ENCODE measurements at regions of chr1 and their contacts with region 1.

Region 1: GRCh38 chr1:171494076-171494475 is 8.7 kb downstream of the PRRC2C start:
- DNase-seq: no peak
- H3K4me3 ChIP-seq: no peak overlapping the region
- H3K4me3 Mint-ChIP-seq: no peak overlapping the region
- H3K27ac Mint-ChIP-seq: no peak overlapping the region
- H3K4me1 ChIP-seq: peaks cover 8% of the 10 kb centered on the region; the same call in 1 of the 2 replicates
- H3K4me1 Mint-ChIP-seq: peaks cover 25% of the 10 kb centered on the region
- H3K27me3 ChIP-seq: no peaks in the 10 kb centered on the region
- H3K27me3 Mint-ChIP-seq: no peaks in the 10 kb centered on the region
- CTCF ChIP-seq: no peak

Region 2: DNA sequence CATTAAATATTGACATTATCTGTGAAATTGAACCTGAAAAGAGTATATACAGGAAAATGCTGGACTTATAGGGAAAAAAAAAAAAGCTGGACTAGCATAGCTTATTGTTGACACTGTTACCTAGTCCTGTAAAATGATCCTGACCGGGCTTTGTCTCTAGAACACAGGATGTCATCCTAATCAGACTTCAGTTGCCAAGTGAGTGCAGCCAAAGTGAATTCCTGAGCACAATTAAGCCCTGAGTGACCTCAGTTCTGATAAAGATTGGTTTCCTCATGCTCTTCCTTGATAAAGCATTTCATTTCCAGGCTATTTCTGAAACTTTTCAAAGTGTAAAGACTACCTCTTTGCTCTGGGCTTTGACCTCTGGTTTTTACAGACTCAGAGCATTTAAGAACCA is 1884.0 kb before region 1 on chr1:
- CTCF ChIA-PET with region 1: no interaction called
- POLR2A ChIA-PET with region 1: interaction called, 10 read pairs
- intact Hi-C with region 1: no loop called
- DNase-seq: no peak
- H3K4me3 ChIP-seq: no peak overlapping the region
- H3K4me3 Mint-ChIP-seq: no peak overlapping the region
- H3K27ac Mint-ChIP-seq: no peak overlapping the region
- H3K4me1 ChIP-seq: 0 out of 2 replicates have a peak, but pooled peaks cover 1% of the 10 kb centered on the region
- H3K4me1 Mint-ChIP-seq: peaks cover 1% of the 10 kb centered on the region
- H3K27me3 ChIP-seq: no peaks in the 10 kb centered on the region
- H3K27me3 Mint-ChIP-seq: peaks cover 5% of the 10 kb centered on the region
- CTCF ChIP-seq: no peak

Region 3: GRCh38 chr1:171334024-171334640 is 159.9 kb before region 1 on chr1:
- CTCF ChIA-PET with region 1: no interaction called
- POLR2A ChIA-PET with region 1: no interaction called
- intact Hi-C with region 1: no loop called
- DNase-seq: no peak
- H3K4me3 ChIP-seq: no peak overlapping the region
- H3K4me3 Mint-ChIP-seq: no peak overlapping the region
- H3K27ac Mint-ChIP-seq: no peak overlapping the region
- H3K4me1 ChIP-seq: no peaks in the 10 kb centered on the region
- H3K4me1 Mint-ChIP-seq: no peaks in the 10 kb centered on the region
- H3K27me3 ChIP-seq: no peaks in the 10 kb centered on the region
- H3K27me3 Mint-ChIP-seq: no peaks in the 10 kb centered on the region
- CTCF ChIP-seq: no peak

Region 4: DNA sequence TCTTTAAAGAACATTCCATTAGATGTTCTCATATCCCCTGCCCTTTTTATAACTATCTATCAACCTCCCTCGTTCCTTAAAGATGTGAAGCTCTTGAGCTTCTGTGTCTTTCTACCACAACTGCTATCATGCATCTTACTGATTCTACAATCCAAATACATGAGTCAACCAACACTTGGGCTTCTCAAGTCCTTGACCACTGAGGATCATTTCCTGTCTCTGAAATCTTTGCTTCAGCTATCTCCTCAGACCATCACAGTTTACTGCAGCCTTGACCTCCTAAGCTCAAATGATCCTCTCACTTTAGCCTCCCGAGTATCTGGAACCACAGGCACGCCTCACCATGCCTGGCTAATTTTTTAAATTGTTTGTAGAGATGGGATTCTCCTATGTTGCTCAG is 104.9 kb before region 1 on chr1:
- CTCF ChIA-PET with region 1: no interaction called
- POLR2A ChIA-PET with region 1: no interaction called
- intact Hi-C with region 1: no loop called
- DNase-seq: no peak
- H3K4me3 ChIP-seq: no peak overlapping the region
- H3K4me3 Mint-ChIP-seq: no peak overlapping the region
- H3K27ac Mint-ChIP-seq: no peak overlapping the region
- H3K4me1 ChIP-seq: peaks cover 10% of the 10 kb centered on the region
- H3K4me1 Mint-ChIP-seq: peaks cover 7% of the 10 kb centered on the region
- H3K27me3 ChIP-seq: no peaks in the 10 kb centered on the region
- H3K27me3 Mint-ChIP-seq: no peaks in the 10 kb centered on the region
- CTCF ChIP-seq: no peak

Region 5: DNA sequence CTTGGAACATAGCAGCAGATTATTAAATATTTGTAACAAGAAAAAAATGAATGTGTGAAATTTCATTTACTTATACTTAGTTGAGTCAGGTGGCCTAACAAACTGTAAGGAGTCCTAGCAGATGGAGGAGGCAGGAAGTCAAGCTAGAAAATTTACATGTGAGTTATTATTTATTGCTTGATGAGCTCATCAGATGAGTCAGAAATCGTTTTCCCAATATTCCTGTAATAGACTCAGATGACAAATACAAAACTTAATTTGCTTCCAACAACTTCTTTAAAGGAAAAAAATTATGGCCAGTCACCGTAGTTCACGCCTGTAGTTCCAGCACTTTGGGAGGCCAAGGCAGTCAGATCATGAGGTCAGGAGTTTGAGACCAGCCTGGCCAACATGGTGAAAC is 52.8 kb before region 1 on chr1:
- CTCF ChIA-PET with region 1: no interaction called
- POLR2A ChIA-PET with region 1: no interaction called
- intact Hi-C with region 1: no loop called
- DNase-seq: no peak
- H3K4me3 ChIP-seq: no peak overlapping the region
- H3K4me3 Mint-ChIP-seq: no peak overlapping the region
- H3K27ac Mint-ChIP-seq: no peak overlapping the region
- H3K4me1 ChIP-seq: no peaks in the 10 kb centered on the region
- H3K4me1 Mint-ChIP-seq: peaks cover 9% of the 10 kb centered on the region
- H3K27me3 ChIP-seq: no peaks in the 10 kb centered on the region
- H3K27me3 Mint-ChIP-seq: no peaks in the 10 kb centered on the region
- CTCF ChIP-seq: no peak

Region 6: GRCh38 chr1:171576144-171576543 is 82.1 kb after region 1 on chr1:
- CTCF ChIA-PET with region 1: no interaction called
- POLR2A ChIA-PET with region 1: no interaction called
- intact Hi-C with region 1: no loop called
- DNase-seq: peak in 1 of 2 experiments; percentile 20
- H3K4me3 ChIP-seq: no peak overlapping the region
- H3K4me3 Mint-ChIP-seq: no peak overlapping the region
- H3K27ac Mint-ChIP-seq: no peak overlapping the region
- H3K4me1 ChIP-seq: no peaks in the 10 kb centered on the region
- H3K4me1 Mint-ChIP-seq: no peaks in the 10 kb centered on the region
- H3K27me3 ChIP-seq: no peaks in the 10 kb centered on the region
- H3K27me3 Mint-ChIP-seq: no peaks in the 10 kb centered on the region
- CTCF ChIP-seq: no peak